Natural killer cell (primary cell): ENCODE measurements at regions of chr17 and their contacts with region 1.

Region 1: DNA sequence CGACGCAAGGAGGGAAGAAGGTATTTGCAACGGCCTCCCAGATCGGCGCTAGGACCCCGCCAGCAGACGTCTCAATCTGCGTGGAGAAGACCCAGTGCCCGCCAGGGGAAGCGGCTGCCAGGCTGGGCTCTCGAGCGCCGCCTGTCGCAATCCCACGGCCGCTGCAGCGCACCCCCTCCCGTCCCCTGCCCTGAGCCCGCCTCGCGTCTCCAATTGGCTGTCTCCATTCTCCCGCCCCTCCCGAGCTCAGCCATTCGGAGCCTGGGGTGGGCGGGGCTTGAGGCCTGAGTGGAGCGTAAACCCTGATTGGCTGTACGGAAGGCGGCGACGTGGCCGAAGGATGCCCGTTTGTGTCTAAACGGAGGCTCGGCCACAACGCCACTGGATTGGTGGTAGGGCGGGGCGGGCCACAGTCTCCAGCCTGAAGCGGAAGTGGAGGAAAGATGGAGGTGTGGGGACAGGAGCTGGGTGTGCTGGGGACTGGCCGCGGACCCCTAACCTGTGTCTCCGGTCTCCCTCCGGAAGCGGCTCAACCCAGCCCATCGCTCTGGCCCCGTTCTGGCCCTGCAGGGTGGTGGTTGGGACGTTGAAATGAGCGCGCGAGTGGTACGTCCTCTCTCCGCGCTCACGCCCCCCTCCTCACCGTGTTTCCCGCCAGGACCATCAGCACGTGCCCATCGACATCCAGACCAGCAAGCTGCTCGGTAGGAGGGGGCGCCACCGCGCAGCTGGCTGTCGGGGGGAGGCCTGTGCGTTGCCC is at the start of gene CDK5RAP3:
- DNase-seq: peak; percentile 98 to 99
- ATAC-seq: peak; percentile 97 to 100 (median 98)
- H3K4me3 ChIP-seq: peak within 1 kb of the TSS; percentile 90
- H3K4me3 Mint-ChIP-seq: peak within 1 kb of the TSS; percentile 92
- H3K27ac ChIP-seq: peak within 1 kb of the TSS; percentile 73
- H3K27ac Mint-ChIP-seq: peak within 1 kb of the TSS; percentile 83 to 87
- H3K4me1 ChIP-seq: peaks cover 15% of the 10 kb centered on the region
- H3K4me1 Mint-ChIP-seq: peaks cover 14 to 24% of the 10 kb centered on the region in 2 donors
- H3K27me3 ChIP-seq: no peaks in the 10 kb centered on the region
- H3K27me3 Mint-ChIP-seq: peaks cover 0 to 4% of the 10 kb centered on the region in 2 donors
- CTCF ChIP-seq: peak; percentile 97
- total RNA-seq, gene CDK5RAP3: 289 to 300 (median 292) TPM

Region 2: DNA sequence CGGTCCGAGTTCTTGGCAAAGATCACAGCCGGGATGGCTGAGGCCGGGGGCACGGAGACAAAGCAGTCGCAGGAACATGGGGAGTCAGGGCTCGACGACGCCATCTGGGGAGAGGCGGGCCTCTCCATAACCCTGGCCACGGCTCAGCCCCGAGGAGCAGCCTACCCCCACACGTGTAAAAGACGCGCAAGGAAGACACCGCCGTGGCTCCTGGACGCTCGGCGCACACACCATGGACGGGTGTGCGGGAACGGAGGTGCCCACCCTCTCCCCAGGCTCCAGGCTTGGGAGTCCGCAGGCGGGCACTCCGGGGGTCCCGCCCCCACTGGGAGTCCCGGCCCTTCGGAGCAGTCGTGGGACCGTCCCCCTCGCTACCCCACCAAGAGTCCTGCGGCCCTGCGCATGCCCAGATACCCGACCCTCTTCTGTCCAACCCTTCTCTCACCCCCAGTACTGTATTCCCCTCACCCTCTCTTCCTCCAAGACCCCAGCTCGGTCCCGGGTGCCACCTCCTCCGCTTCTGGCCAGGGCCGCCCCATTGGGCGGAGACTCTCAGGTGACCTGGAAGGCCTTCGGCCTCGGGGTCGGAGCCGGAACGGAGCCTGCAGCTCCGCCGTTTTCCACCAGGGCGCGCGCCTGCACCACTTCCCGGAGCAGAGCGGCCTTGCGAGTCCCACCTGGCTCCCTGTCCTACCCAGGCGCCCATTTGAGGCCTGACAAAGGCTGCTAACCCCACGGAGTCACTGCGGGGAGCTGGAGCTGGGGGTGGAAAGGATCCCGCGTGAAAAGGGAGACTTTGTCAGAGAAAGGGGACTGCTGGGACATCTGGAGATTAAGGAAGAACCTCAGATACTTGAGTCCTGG is 129.9 kb before region 1 on chr17 and contains the start of gene SCRN2:
- intact Hi-C with region 1: loop called (anchors 1 kb)
- DNase-seq: peak; percentile 89 to 90
- ATAC-seq: peak; percentile 95 to 96 (median 96)
- H3K4me3 ChIP-seq: peak within 1 kb of the TSS; percentile 90
- H3K4me3 Mint-ChIP-seq: peak within 1 kb of the TSS; percentile 99
- H3K27ac ChIP-seq: peak within 1 kb of the TSS; percentile 49
- H3K27ac Mint-ChIP-seq: peak within 1 kb of the TSS; percentile 81 to 97
- H3K4me1 ChIP-seq: peaks cover 18% of the 10 kb centered on the region
- H3K4me1 Mint-ChIP-seq: peaks cover 15 to 24% of the 10 kb centered on the region in 2 donors
- H3K27me3 ChIP-seq: peaks cover 4% of the 10 kb centered on the region
- H3K27me3 Mint-ChIP-seq: peaks cover 8 to 16% of the 10 kb centered on the region in 2 donors
- CTCF ChIP-seq: peak; percentile 87
- total RNA-seq, gene SCRN2: 33.7 to 38.0 (median 35.7) TPM

Region 3: GRCh38 chr17:47895856-47896671 is 74.8 kb before region 1 on chr17 and contains the start of gene SP2:
- intact Hi-C with region 1: loop called (anchors 1 kb)
- DNase-seq: peak; percentile 100
- ATAC-seq: peak; percentile 81 to 95 (median 84)
- H3K4me3 ChIP-seq: peak within 1 kb of the TSS; percentile 83
- H3K4me3 Mint-ChIP-seq: peak within 1 kb of the TSS; percentile 98
- H3K27ac ChIP-seq: peak within 1 kb of the TSS; percentile 90
- H3K27ac Mint-ChIP-seq: peak within 1 kb of the TSS; percentile 95 to 97
- H3K4me1 ChIP-seq: peaks cover 18% of the 10 kb centered on the region
- H3K4me1 Mint-ChIP-seq: peaks cover 43 to 45% of the 10 kb centered on the region in 2 donors
- H3K27me3 ChIP-seq: no peaks in the 10 kb centered on the region
- H3K27me3 Mint-ChIP-seq: no peaks in the 10 kb centered on the region
- CTCF ChIP-seq: no peak
- total RNA-seq, gene SP2: 29.4 to 44.1 (median 33.1) TPM

Region 4: DNA sequence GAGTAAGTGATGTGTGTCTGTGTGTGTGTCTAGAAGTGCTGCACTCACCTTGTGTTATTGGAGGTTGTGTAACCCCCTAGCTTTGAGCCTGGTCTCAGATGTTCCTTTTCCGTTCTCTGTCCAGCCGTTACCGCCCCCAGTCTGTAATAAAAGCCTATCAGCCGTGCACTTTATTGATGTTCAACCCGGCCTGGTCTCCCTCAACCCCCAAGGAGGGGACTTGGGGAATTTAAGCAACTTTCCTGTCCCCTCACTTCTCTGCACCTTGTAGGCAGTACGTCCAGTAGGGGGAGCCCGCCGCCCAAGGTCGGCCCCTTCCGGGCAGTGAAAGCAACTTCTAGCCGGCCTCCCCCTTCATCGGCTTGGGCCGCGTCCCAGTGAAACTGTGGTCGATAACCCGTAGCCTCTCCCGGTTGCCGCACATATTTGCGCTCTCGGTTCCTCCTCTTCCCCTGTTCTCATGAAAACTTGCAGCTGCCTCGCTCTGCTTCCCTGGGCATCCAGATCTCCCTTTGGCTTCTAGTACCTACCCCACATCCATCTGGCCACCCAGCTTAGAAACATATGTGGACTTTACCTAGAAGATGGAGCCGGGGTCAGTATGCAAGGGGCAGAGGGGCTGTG is 21.6 kb before region 1 on chr17:
- intact Hi-C with region 1: loop called (anchors 2 kb)
- DNase-seq: peak; percentile 81 to 82
- ATAC-seq: peak; percentile 76 to 80 (median 79)
- H3K4me3 ChIP-seq: peak overlapping the region; percentile 18
- H3K4me3 Mint-ChIP-seq: peak overlapping the region; percentile 51
- H3K27ac ChIP-seq: peak overlapping the region; percentile 41
- H3K27ac Mint-ChIP-seq: peak overlapping the region; percentile 66 to 83
- H3K4me1 ChIP-seq: peaks cover 40% of the 10 kb centered on the region
- H3K4me1 Mint-ChIP-seq: peaks cover 20 to 34% of the 10 kb centered on the region in 2 donors
- H3K27me3 ChIP-seq: no peaks in the 10 kb centered on the region
- H3K27me3 Mint-ChIP-seq: no peaks in the 10 kb centered on the region
- CTCF ChIP-seq: peak; percentile 97